Right ventricle myocardium inferior (tissue), 1 donor: ENCODE measurements at regions of chr3 and their contacts with region 1.

Region 1: DNA sequence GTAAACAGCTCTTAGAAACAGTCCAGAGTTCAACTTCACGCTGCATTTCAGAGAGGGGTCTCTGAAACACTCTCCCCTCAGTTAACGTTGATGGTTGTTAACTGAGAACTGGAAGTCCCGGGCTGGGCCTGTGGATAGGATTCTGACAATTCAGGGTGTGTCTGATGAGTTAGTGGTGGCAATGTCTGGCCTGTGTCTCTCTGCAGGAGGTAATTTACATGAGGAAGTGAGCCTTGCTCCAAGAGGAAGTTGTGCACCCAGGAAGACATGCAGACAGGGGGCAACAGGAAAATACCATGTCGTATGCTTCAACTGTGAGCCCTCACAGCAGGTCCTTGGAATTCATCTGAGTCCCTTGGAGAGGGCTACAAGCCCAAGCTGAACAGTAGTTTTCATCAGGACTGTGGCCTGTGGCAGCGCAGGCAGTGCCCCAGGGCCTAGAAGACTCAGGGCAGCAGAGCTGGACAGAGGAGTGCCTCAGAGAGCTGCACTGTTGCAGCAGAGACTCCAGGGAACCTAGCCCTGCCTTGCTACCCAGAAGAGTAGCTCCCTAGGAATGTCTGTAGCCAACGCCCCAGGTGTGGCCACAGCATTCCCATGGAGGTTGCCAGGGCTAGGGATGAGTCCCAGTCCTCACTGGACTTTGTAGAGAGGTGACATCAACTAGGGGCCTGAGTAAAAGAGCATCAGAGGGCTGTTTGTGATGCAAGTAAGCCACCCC is 104.6 kb upstream of the SELENOK start:
- DNase-seq: no peak
- ATAC-seq: peak; percentile 17

Region 2: GRCh38 chr3:54120657-54121413 is 124.5 kb after region 1 on chr3:
- intact Hi-C with region 1: loop called (anchors 5 kb)
- DNase-seq: no peak
- ATAC-seq: no peak